RWPE1 (cell line): ENCODE measurements at regions of chr6 and their contacts with region 1.

Region 1: DNA sequence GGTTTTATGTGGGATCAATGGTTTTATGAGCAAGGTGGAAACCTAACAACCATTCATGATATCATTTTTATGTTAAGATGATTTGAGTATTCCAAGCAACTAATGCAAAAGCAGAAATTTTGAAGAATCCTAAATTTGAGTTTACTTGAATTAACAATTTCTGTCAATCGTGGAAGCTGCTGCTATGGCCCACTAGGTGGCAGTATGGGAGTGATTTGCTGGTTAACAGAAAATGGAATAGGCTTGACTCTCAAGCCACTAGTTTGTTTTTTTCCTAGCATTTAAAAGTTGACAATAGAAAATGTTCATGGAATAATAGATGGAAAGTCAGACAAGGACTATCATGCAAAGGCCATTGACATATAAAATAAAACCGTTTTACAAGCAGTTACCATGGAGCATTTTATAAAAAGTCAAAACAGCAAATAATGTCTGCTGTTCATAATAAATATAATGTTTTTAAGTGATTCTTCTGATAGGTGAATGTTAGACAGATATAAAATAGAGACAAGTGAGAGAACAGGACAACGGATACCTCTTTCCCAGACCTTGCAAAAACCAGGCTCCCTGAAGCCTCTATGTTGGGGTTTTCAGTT is 43.0 kb upstream of the TMEM200A start:
- DNase-seq: peak; percentile 27
- H3K27ac ChIP-seq: no peak overlapping the region
- CTCF ChIP-seq: peak; percentile 93

Region 2: GRCh38 chr6:130223508-130223907 is 99.3 kb before region 1 on chr6:
- CTCF ChIA-PET with region 1: no interaction called
- POLR2A ChIA-PET with region 1: no interaction called
- DNase-seq: no peak
- H3K27ac ChIP-seq: no peak overlapping the region
- CTCF ChIP-seq: no peak

Region 3: DNA sequence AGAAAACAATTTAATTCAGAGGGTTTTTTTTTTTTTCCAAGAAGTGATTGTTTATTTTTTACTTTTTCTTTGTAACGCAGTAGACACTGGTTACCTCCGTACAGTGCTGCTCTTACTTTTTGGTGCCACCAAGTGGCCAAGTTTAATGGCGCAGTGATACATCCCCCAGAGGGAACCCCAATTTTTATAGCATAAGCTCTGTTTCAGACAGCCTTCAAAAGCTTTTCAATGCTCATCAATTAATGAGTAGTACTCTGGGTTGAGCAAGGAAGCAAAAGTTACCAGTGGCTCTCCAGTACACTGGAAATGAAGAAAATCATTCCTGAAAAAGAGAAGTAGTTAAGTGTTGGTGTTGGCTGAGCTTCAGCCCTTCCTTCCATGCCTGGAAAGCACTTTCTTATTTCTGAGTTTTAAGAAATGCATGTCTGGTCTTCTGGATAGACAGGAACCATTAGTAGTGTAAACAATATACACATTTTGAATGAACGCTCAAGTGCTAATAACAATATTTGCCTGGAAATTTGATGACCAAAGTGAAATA is 375.3 kb after region 1 on chr6:
- CTCF ChIA-PET with region 1: interaction called, 18 read pairs
- POLR2A ChIA-PET with region 1: no interaction called
- DNase-seq: peak; percentile 60
- H3K27ac ChIP-seq: no peak overlapping the region
- CTCF ChIP-seq: peak; percentile 90